Posterior cingulate gyrus (tissue), 11 donors: ENCODE measurements at regions of chr10 and their contacts with region 1.

Region 1: GRCh38 chr10:127715782-127716378 is 21.1 kb upstream of the FOXI2 start:
- DNase-seq: no peak

Region 2: DNA sequence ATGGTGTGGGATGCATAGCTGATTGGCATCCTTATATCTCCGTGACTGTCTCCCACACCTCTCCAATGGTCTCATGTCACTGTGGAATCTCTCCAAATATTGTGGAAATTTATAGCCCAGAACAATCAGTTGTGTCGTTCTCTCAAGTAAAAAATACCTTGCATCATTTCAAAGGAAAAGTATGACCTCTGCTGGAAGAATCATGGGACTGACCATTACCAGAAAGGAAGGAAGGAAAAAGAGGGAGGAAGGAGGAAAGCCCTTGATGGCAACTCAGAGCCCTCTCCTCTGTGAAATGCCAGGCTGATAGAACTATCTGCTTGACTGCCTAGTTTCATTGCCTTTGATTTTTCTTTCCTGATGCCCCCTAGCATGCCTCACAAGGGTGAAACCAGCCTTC is 97.4 kb after region 1 on chr10:
- intact Hi-C with region 1: loop called (anchors 2 kb)
- DNase-seq: no peak

Region 3: DNA sequence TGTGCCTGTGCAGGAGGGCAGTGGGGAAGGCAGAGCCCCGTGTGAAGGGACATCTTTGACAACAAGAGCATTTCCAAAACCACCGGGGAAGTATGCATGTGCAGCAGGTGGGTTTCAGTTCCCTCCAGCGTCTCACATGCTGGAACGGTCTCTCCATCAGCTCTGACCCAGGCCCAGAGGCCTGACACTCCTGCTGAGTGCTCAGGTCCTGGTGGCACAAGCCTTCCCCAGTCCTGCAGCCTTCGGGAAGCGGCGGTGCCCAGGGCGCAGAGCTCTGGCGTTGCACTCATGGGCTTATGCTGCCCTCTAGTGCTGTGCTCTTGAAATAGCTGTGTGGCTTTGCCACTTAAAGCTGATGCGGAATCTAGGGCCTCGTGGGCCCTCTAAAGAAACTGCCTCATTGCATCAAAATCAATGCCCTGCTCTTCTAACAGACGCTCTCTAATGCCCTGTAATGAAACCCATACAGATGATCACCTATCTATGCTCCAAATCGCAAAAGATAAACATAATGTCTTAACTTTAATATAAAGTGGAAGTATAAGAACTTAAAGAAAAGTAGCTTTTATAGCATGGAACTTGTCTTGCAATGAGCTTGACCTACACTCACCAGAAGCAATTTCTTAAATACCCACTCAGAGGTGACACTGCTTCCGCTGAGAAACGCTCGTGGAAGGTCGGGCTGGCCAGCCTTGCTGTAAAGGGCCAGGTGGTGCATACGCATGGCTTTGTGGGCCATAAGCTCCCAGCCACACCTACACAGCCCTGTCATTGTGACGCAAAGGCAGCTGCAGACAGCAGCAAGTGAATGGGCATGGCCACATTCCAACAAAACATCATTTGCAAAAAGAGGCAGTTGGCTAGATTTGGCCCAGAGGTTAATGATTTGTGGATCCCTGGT is 138.2 kb after region 1 on chr10:
- intact Hi-C with region 1: loop called (anchors 1 kb)
- DNase-seq: peak; percentile 54 to 97 (median 78)

Region 4: DNA sequence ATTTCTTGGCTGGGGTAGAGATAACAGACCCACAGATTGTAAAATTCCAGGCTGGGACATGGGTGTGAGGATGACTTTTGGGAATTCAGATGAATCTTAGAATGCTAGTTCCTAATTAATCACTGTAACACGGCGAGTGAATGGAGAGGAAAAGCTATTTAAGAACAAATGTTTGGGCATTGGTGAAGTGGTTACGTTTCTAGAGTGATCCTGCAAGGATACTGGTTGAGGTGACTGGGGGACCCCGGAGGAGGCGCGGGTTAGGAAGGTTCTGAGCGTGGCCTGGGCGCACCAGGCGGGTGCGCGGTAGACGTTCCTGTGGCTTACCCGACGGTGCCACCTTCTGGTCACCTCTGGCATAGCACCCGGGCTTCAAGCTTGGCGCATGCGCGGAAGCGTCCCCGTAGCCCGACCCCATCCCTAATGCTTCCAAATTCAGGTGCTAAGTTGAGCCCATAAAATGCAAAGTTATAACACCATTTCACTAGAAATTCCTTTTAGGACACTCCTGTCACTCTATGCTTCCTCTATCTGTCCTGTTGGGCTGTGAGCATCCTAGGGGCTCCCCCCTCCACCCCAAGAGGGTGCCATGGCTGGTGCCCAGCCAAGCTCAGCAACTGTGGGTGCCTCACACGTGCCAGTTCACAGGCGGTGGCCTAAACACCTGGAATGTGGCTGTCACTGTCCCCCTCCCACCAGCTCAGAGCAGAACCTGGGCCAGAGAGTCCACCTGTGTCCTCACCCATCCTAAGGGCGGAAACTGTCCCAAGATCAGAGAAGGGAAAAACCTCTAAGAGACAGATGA is 295.5 kb after region 1 on chr10:
- intact Hi-C with region 1: loop called (anchors 10 kb)
- DNase-seq: peak; percentile 67 to 97 (median 85)